ENCODE measurements at regions of chr16 and their contacts with region 1.

Region 1: GRCh38 chr16:25366078-25366477 is 108.4 kb upstream of the ZKSCAN2 start:
- DNase-seq: no peak
- H3K4me3 ChIP-seq: no peak overlapping the region
- H3K27ac ChIP-seq: no peak overlapping the region
- H3K4me1 ChIP-seq: no peaks in the 10 kb centered on the region
- H3K27me3 ChIP-seq: no peaks in the 10 kb centered on the region
- CTCF ChIP-seq: no peak
- EP300 ChIP-seq: no peak
- POLR2A ChIP-seq: no peak

Region 2: GRCh38 chr16:25143928-25144327 is 222.2 kb before region 1 on chr16:
- in situ Hi-C with region 1: no loop called
- intact Hi-C with region 1: no loop called
- DNase-seq: peak; percentile 25
- H3K4me3 ChIP-seq: no peak overlapping the region
- H3K27ac ChIP-seq: no peak overlapping the region
- H3K4me1 ChIP-seq: peaks cover 0 to 10% (median 7%) of the 10 kb centered on the region in 4 donors
- H3K27me3 ChIP-seq: no peaks in the 10 kb centered on the region
- CTCF ChIP-seq: peak; percentile 28 to 49 (median 41)
- EP300 ChIP-seq: no peak
- POLR2A ChIP-seq: no peak

Region 3: DNA sequence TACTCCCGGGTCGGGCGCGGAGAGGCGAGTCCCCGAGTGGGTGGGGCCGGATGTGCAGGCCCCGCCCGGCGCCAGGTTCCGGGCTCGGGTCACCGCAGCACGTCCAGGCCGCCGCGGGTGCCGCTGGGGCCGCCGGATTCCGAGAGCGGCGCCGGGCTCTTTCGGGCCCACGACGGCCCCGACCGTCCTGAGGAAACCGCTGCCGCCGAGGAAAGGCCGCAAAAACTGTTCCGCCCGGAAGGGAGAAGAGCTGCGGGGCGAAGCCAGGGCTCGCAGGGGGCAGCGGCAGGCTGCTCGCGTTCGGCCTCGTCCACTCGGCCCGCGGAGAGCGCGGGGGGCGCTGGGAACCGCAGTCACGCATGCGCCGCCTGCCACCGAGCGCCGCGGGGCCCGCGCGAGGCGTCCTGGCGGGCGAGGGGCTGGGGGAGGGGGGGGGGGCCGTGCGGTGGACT is 108.5 kb before region 1 on chr16 and contains the start of gene ZKSCAN2:
- in situ Hi-C with region 1: loop called in 1 of 4 experiments (anchors 25 kb)
- intact Hi-C with region 1: no loop called
- DNase-seq: peak; percentile 95
- H3K4me3 ChIP-seq: peak within 1 kb of the TSS; percentile 67 to 87 (median 81)
- H3K27ac ChIP-seq: peak within 1 kb of the TSS; percentile 97 to 100 (median 98)
- H3K4me1 ChIP-seq: peaks cover 11 to 34% (median 32%) of the 10 kb centered on the region in 4 donors
- H3K27me3 ChIP-seq: no peaks in the 10 kb centered on the region
- CTCF ChIP-seq: no peak
- EP300 ChIP-seq: no peak
- POLR2A ChIP-seq: peak; percentile 93
- total RNA-seq, gene ZKSCAN2: 1.2 to 2.7 (median 1.8) TPM

Measured in transverse colon (tissue), 4 donors.